ENCODE measurements at regions of chr14 and their contacts with region 1.

Region 1: DNA sequence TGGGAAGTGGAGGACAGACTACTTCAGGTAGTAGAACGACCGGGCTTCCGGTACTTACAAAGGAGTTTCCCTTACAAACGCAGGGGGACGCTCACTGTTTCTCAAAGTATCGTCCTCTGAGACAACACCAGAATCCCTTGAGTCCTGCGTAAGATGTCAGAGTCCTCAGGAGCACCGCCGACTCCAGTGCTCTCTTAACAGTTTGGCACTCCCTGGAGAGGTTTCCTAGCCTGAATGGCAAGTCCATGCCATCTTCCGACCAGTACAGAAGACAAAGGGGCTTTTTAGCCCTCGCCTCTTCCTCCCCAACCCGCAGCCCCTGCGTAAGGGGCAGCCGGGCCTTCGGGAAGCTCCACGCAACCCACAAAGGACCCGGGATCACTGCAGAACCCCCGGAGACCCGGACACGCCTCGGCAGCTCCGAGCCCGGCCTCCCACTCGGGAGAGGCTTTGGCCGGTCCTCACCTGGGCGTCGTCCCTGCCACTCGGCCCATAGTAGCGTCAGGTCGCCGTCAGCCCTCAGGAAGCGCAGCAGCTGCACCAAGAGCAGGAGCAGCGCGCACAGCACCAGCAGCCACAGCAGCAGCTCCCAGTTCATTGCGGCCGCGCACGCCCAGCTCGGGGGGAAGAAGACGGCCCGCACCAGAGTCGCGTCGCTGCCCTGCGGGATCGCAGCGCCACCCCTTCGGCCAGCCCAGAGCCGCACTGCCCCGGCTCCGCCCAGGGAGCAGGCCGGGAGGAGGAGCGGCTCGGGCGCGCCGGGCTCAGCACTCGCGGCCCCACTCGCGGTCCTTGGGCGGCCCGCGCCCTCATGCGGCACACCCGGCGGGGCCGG is at the start of gene DHRS7:
- DNase-seq: peak; percentile 53
- ATAC-seq: peak; percentile 96
- H3K4me3 ChIP-seq: peak within 1 kb of the TSS; percentile 92
- H3K27ac ChIP-seq: peak within 1 kb of the TSS; percentile 88
- H3K4me1 ChIP-seq: peaks cover 20% of the 10 kb centered on the region
- H3K27me3 ChIP-seq: no peaks in the 10 kb centered on the region
- CTCF ChIP-seq: peak; percentile 46 to 76 (median 52); a peak in 5 of 6 replicates
- EP300 ChIP-seq: 0 out of 4 replicates have a peak, but pooled peaks of 1 of the 2 experiments have one; percentile 20
- POLR2A ChIP-seq: peak; percentile 93
- RAD21 ChIP-seq: peak; percentile 65
- polyA plus RNA-seq, gene DHRS7: 59.1 to 66.1 TPM

Region 2: DNA sequence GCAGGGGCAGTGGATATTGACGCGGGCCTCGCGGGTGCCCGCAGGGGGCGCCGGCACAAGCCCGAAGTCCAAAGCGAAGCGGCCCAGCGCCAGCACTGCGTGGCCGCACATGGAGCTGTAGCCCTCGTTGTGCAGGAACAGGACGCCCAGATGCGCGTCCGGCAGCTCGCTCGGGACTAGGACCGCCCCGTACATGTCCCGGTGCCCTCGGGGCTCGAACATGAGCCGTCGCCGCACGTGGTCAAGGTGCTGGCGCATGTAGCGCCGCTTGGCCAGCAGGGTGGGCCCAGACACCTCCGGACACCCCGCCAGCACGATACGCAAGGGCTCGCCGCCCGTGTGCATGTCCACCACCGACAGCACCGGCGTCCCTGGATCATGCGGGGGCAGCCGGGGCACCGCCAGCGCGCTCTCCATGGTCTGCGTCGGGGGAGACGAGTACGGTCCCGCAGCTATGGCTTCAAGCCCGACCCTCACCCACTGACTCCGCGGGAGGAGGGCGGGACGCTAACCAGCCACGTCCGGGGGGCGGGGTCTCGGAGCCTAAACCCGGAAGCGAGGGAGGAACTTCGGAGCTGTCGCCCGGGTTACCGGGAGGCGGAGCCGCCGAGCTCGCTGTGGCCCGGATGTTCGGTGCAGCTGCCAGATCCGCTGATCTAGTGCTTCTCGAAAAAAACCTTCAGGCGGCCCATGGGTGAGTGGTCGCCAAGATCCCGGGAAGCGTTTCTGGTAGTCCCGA is 680.9 kb before region 1 on chr14 and contains the starts of genes JKAMP and L3HYPDH:
- CTCF ChIA-PET with region 1: no interaction called
- POLR2A ChIA-PET with region 1: no interaction called
- RAD21 ChIA-PET with region 1: no interaction called
- SMC1A ChIA-PET with region 1: no interaction called
- in situ Hi-C with region 1: loop called (anchors 25 kb)
- intact Hi-C with region 1: loop called (anchors 10 kb)
- DNase-seq: peak; percentile 78
- ATAC-seq: peak; percentile 88
- H3K4me3 ChIP-seq: peak within 1 kb of the TSS; percentile 83
- H3K27ac ChIP-seq: peak within 1 kb of the TSS; percentile 85
- H3K4me1 ChIP-seq: peaks cover 10% of the 10 kb centered on the region; the same call in 1 of the 2 replicates
- H3K27me3 ChIP-seq: no peaks in the 10 kb centered on the region
- CTCF ChIP-seq: peak; percentile 44 to 58 (median 57); a peak in 4 of 6 replicates
- EP300 ChIP-seq: 0 out of 4 replicates have a peak, but pooled peaks of 1 of the 2 experiments have one; percentile 7
- POLR2A ChIP-seq: peak; percentile 95
- RAD21 ChIP-seq: no peak
- polyA plus RNA-seq, gene JKAMP: 66.3 to 129 TPM
- polyA plus RNA-seq, gene L3HYPDH: 13.5 to 19.5 TPM

Region 3: DNA sequence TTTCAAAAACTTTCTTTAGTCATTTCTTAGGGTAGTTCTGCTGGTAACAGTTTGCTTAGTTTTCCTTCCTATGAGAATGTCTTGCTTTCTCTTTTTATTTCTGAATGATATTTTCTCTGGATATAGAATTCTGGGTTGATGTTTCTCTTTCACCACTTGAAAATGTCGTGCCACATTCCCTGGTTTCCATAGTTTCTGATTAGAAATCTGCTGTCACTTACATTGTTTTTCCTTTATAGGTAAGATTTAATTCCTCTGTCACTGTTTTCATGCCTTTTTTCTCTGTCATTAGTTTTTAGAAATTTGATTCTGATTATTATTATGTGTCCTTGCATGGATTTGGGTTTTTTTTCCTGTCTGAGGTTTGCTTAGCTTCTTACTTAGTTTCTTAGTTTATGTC is 150.5 kb before region 1 on chr14:
- CTCF ChIA-PET with region 1: no interaction called
- POLR2A ChIA-PET with region 1: no interaction called
- RAD21 ChIA-PET with region 1: no interaction called
- SMC1A ChIA-PET with region 1: no interaction called
- in situ Hi-C with region 1: no loop called
- intact Hi-C with region 1: no loop called
- DNase-seq: no peak
- ATAC-seq: no peak
- H3K4me3 ChIP-seq: no peak overlapping the region
- H3K27ac ChIP-seq: no peak overlapping the region
- H3K4me1 ChIP-seq: no peaks in the 10 kb centered on the region
- H3K27me3 ChIP-seq: no peaks in the 10 kb centered on the region
- CTCF ChIP-seq: no peak
- EP300 ChIP-seq: no peak
- POLR2A ChIP-seq: no peak
- RAD21 ChIP-seq: no peak

Region 4: DNA sequence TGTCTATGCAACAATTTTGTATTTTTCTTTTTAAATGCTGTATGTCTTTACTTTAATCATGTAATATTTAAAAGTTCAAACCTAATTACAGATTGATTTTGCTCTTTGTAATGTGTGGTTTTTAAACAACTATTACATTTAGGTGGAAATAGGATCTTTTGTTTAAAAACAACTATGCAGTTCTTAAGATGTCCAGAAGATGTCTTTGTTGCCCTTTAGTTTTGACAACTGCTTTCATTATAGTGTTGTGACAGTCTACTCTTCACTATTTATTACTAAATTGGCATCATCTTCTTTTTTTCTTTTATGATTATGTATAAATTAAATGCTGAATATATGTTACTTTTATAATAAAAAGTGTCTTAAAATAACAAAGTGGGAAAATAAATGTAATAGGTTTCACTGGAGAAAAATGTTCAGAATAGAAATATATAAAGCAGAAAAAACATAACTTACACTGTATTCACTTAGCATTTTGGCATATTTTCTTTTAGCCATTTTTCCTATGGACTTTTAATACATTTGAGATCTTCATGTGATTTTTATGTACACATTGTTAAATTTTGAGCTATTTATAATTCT is 100.3 kb before region 1 on chr14:
- CTCF ChIA-PET with region 1: interaction called, 66 read pairs
- POLR2A ChIA-PET with region 1: interaction called, 3 read pairs
- RAD21 ChIA-PET with region 1: interaction called, 19 read pairs
- SMC1A ChIA-PET with region 1: interaction called, 58 read pairs
- in situ Hi-C with region 1: no loop called
- intact Hi-C with region 1: loop called (anchors 5 kb)
- DNase-seq: peak; percentile 15
- ATAC-seq: peak; percentile 80
- H3K4me3 ChIP-seq: no peak overlapping the region
- H3K27ac ChIP-seq: no peak overlapping the region
- H3K4me1 ChIP-seq: no peaks in the 10 kb centered on the region
- H3K27me3 ChIP-seq: no peaks in the 10 kb centered on the region
- CTCF ChIP-seq: peak; percentile 41 to 71 (median 52); a peak in 5 of 6 replicates
- EP300 ChIP-seq: no peak
- POLR2A ChIP-seq: no peak
- RAD21 ChIP-seq: peak; percentile 70

Region 5: GRCh38 chr14:60091550-60092530 is 73.1 kb before region 1 on chr14 and contains the start of gene PCNX4:
- CTCF ChIA-PET with region 1: interaction called, 14 read pairs
- POLR2A ChIA-PET with region 1: interaction called, 20 read pairs
- RAD21 ChIA-PET with region 1: interaction called, 13 read pairs
- SMC1A ChIA-PET with region 1: interaction called, 14 read pairs
- in situ Hi-C with region 1: no loop called
- intact Hi-C with region 1: loop called (anchors 1 kb)
- DNase-seq: peak; percentile 96
- ATAC-seq: peak; percentile 89
- H3K4me3 ChIP-seq: peak within 1 kb of the TSS; percentile 74
- H3K27ac ChIP-seq: peak within 1 kb of the TSS; percentile 95
- H3K4me1 ChIP-seq: peaks cover 11% of the 10 kb centered on the region
- H3K27me3 ChIP-seq: no peaks in the 10 kb centered on the region
- CTCF ChIP-seq: 0 out of 6 replicates have a peak, but pooled peaks of 1 of the 3 experiments have one; percentile 2
- EP300 ChIP-seq: peak; percentile 39 to 50; a peak in 3 of 4 replicates
- POLR2A ChIP-seq: peak; percentile 97
- RAD21 ChIP-seq: no peak
- polyA plus RNA-seq, gene PCNX4: 13.8 to 15.7 TPM

Region 6: GRCh38 chr14:60151715-60152114 is 13.2 kb before region 1 on chr14:
- CTCF ChIA-PET with region 1: interaction called, 3 read pairs
- POLR2A ChIA-PET with region 1: interaction called, 7 read pairs
- RAD21 ChIA-PET with region 1: interaction called, 6 read pairs
- SMC1A ChIA-PET with region 1: interaction called, 10 read pairs
- in situ Hi-C with region 1: no loop called
- intact Hi-C with region 1: no loop called
- DNase-seq: no peak
- ATAC-seq: peak; percentile 83
- H3K4me3 ChIP-seq: no peak overlapping the region
- H3K27ac ChIP-seq: no peak overlapping the region
- H3K4me1 ChIP-seq: peaks cover 5% of the 10 kb centered on the region; the same call in 1 of the 2 replicates
- H3K27me3 ChIP-seq: no peaks in the 10 kb centered on the region
- CTCF ChIP-seq: no peak
- EP300 ChIP-seq: no peak
- POLR2A ChIP-seq: no peak
- RAD21 ChIP-seq: no peak

Region 7: DNA sequence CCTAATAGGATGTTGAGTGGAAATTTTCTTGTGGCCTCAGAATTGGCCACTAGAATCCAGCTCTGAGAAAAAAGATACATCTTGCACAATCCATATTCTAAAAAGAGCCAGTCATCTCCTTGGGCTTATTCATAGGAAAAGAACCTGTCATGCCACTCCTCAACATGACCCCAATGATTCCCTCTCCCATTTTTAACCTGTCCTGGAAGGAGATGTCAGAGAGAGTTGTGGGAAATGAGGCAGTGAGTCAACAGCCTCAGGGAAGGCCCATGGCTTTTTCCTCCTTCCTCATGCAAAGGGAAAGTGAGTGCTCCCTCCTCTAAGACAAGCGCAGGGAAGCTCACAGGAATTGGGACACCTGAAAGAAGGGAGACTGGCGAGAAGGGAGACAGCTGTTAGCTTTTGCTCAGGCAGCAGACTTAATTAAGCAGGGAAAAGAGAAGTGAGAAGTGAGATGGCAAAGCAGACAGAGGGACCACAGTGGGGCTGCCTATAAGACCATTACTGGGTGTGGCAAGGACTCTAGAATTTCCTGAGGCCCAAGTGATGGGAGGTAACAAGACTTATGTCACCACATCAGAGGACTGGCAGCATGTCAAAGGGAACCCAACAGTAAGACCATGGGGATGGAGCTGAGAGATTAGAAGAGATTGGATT is 10.4 kb after region 1 on chr14:
- CTCF ChIA-PET with region 1: interaction called, 149 read pairs
- POLR2A ChIA-PET with region 1: interaction called, 4 read pairs
- RAD21 ChIA-PET with region 1: interaction called, 98 read pairs
- SMC1A ChIA-PET with region 1: interaction called, 149 read pairs
- in situ Hi-C with region 1: no loop called
- intact Hi-C with region 1: no loop called
- DNase-seq: no peak
- ATAC-seq: peak; percentile 82
- H3K4me3 ChIP-seq: no peak overlapping the region
- H3K27ac ChIP-seq: no peak overlapping the region
- H3K4me1 ChIP-seq: no peaks in the 10 kb centered on the region
- H3K27me3 ChIP-seq: no peaks in the 10 kb centered on the region
- CTCF ChIP-seq: no peak
- EP300 ChIP-seq: no peak
- POLR2A ChIP-seq: no peak
- RAD21 ChIP-seq: no peak